Psoas muscle (tissue), 8 donors: ENCODE measurements at regions of chr1 and their contacts with region 1.

Region 1: GRCh38 chr1:186393476-186393875 is 17.8 kb downstream of the ODR4 start:
- DNase-seq: no peak
- ATAC-seq: no peak
- H3K4me3 ChIP-seq: no peak overlapping the region
- H3K27ac ChIP-seq: no peak overlapping the region
- H3K4me1 ChIP-seq: no peaks in the 10 kb centered on the region
- H3K27me3 ChIP-seq: no peaks in the 10 kb centered on the region
- CTCF ChIP-seq: no peak

Region 2: GRCh38 chr1:186340772-186341171 is 52.7 kb before region 1 on chr1:
- intact Hi-C with region 1: loop called in 1 of 2 experiments (anchors 10 kb)
- DNase-seq: no peak
- ATAC-seq: no peak
- H3K4me3 ChIP-seq: no peak overlapping the region
- H3K27ac ChIP-seq: no peak overlapping the region
- H3K4me1 ChIP-seq: no peaks in the 10 kb centered on the region
- H3K27me3 ChIP-seq: no peaks in the 10 kb centered on the region
- CTCF ChIP-seq: no peak